Activated CD4-positive, alpha-beta T cell treated with anti-CD3 and anti-CD28 coated beads, Interleukin-2, amount 10 ng/mL, durations not matched to agents 24 days and 14 days (primary cell): ENCODE measurements at regions of chr4 and their contacts with region 1.

Region 1: GRCh38 chr4:47463235-47463956 is at the start of gene COMMD8:
- DNase-seq: peak; percentile 99
- H3K4me3 Mint-ChIP-seq: peak within 1 kb of the TSS; percentile 88
- H3K27ac Mint-ChIP-seq: peak within 1 kb of the TSS; percentile 77
- H3K4me1 Mint-ChIP-seq: peaks cover 22% of the 10 kb centered on the region
- H3K27me3 Mint-ChIP-seq: no peaks in the 10 kb centered on the region
- total RNA-seq, gene COMMD8: 17.6 and 17.8 TPM in 2 replicates

Region 2: DNA sequence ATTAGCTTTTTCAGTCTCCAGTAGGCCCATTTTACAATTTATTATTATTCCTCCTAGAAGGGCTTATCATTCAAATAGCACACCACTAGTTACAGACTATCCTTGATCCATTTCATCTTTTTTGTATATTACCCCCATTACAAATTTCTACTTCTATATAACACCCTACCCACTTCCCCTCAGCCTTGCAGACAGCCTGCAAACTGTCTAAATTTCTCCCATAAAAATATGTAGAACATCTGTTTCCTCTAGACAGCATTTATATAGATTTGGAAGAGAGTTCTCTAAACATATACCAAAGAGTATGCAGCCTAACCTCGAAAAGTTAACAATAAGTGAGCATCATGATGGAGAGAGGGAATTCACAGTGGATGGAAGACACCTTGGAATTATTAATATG is 30.6 kb before region 1 on chr4:
- intact Hi-C with region 1: no loop called
- DNase-seq: no peak
- H3K4me3 Mint-ChIP-seq: no peak overlapping the region
- H3K27ac Mint-ChIP-seq: no peak overlapping the region
- H3K4me1 Mint-ChIP-seq: no peaks in the 10 kb centered on the region
- H3K27me3 Mint-ChIP-seq: peaks cover 9% of the 10 kb centered on the region

Region 3: DNA sequence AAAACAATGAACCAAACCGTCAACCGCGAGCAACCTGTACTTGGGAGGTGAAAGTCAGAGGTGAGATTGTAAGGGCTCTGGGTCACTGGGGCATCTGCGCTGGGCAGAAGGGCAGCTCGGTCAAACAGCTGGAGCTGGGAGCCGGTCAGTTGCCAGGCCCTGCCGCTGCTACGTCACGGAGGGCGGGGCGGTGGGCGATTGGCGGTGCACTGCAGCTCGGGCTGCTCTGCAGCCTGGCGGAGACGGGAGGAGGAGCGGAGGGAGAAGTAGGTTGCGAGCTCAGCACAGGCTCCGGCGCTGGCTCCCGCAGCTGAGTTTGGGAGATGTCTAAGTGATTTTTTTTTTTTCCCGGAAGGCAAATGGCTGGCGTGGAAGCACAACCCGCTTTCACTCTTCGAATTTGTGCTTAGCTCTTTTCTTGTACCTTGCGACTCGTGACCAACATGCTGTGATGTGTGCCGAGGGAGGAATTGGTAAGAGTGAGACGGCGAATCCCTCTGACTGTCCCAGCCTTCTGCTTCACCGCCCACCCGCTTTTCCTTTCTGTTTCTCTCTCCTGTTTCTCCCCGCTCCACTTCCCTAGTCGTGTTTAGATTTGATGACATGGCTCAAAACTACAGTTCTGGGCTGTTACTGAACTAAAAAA is 21.8 kb after region 1 on chr4 and contains the start of gene ATP10D:
- intact Hi-C with region 1: loop called (anchors 1 kb)
- DNase-seq: peak; percentile 93
- H3K4me3 Mint-ChIP-seq: peak within 1 kb of the TSS; percentile 93
- H3K27ac Mint-ChIP-seq: peak within 1 kb of the TSS; percentile 85
- H3K4me1 Mint-ChIP-seq: peaks cover 21% of the 10 kb centered on the region
- H3K27me3 Mint-ChIP-seq: peaks cover 10% of the 10 kb centered on the region
- total RNA-seq, gene ATP10D: 0.71 and 1.3 TPM in 2 replicates

Region 4: GRCh38 chr4:47538495-47539154 is 75.2 kb after region 1 on chr4:
- intact Hi-C with region 1: no loop called
- DNase-seq: no peak
- H3K4me3 Mint-ChIP-seq: no peak overlapping the region
- H3K27ac Mint-ChIP-seq: no peak overlapping the region
- H3K4me1 Mint-ChIP-seq: peaks cover 7% of the 10 kb centered on the region
- H3K27me3 Mint-ChIP-seq: no peaks in the 10 kb centered on the region

Region 5: GRCh38 chr4:47562297-47562696 is 98.9 kb after region 1 on chr4:
- intact Hi-C with region 1: loop called (anchors 1 kb)
- DNase-seq: no peak
- H3K4me3 Mint-ChIP-seq: no peak overlapping the region
- H3K27ac Mint-ChIP-seq: no peak overlapping the region
- H3K4me1 Mint-ChIP-seq: peaks cover 9% of the 10 kb centered on the region
- H3K27me3 Mint-ChIP-seq: no peaks in the 10 kb centered on the region

Region 6: GRCh38 chr4:47914220-47914925 is 451.0 kb after region 1 on chr4 and contains the start of gene NFXL1:
- intact Hi-C with region 1: loop called (anchors 1 kb)
- DNase-seq: peak; percentile 98
- H3K4me3 Mint-ChIP-seq: peak within 1 kb of the TSS; percentile 84
- H3K27ac Mint-ChIP-seq: peak within 1 kb of the TSS; percentile 91
- H3K4me1 Mint-ChIP-seq: peaks cover 25% of the 10 kb centered on the region
- H3K27me3 Mint-ChIP-seq: peaks cover 7% of the 10 kb centered on the region
- total RNA-seq, gene NFXL1: 11.2 and 15.0 TPM in 2 replicates